Natural killer cell (primary cell): ENCODE measurements at regions of chr19 and their contacts with region 1.

Region 1: GRCh38 chr19:46932346-46932745 is 71.5 kb downstream of the ARHGAP35 start:
- DNase-seq: no peak
- ATAC-seq: no peak
- H3K4me3 ChIP-seq: no peak overlapping the region
- H3K4me3 Mint-ChIP-seq: no peak overlapping the region
- H3K27ac ChIP-seq: no peak overlapping the region
- H3K27ac Mint-ChIP-seq: no peak overlapping the region
- H3K4me1 ChIP-seq: peaks cover 29% of the 10 kb centered on the region
- H3K4me1 Mint-ChIP-seq: peaks cover 57 to 69% of the 10 kb centered on the region in 2 donors
- H3K27me3 ChIP-seq: no peaks in the 10 kb centered on the region
- H3K27me3 Mint-ChIP-seq: no peaks in the 10 kb centered on the region
- CTCF ChIP-seq: no peak

Region 2: DNA sequence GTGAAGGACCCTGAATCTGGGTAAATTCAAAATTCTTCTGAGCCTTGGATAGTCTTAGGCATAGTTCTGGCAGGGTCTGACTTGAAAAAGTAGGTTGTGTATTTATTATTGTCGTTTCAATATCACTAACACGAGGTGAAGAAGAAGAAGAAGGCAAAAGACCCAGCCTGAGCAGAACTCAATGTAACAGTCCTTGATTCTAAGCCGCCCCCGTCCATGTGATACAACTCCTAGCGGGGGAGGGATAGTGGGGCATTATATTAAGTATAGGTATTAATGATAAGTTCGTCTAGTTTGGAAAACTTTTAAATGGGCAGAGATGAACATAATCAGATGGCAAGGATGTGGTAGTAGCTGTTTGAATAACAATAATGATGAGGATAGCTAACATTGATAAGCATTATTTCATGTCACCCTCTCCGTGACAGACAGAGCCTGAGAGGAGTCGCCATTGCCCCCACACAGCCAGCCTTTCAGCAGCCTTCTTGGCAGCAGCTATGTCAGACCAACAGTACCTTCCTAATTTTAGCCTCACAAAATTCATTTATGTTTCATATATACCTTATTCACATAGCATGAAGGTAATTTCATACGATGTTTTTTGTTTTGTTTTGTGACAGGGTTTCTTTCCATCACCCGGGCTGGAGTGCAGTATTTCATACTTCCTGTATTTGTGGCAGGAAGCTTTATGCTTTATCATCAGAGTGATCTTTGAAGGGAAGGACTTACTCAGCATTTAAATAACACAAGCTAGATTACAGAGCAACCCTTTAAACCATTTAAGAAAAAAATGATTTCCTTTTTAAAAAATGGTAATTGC is 22.9 kb after region 1 on chr19:
- intact Hi-C with region 1: loop called (anchors 2 kb)
- DNase-seq: peak in 1 of 2 donors; percentile 71
- ATAC-seq: peak; percentile 84 to 86 (median 86)
- H3K4me3 ChIP-seq: peak overlapping the region; percentile 37
- H3K4me3 Mint-ChIP-seq: peak overlapping the region; percentile 81
- H3K27ac ChIP-seq: peak overlapping the region; percentile 79
- H3K27ac Mint-ChIP-seq: peak overlapping the region; percentile 92 to 93
- H3K4me1 ChIP-seq: peaks cover 55% of the 10 kb centered on the region
- H3K4me1 Mint-ChIP-seq: peaks cover 62 to 63% of the 10 kb centered on the region in 2 donors
- H3K27me3 ChIP-seq: no peaks in the 10 kb centered on the region
- H3K27me3 Mint-ChIP-seq: no peaks in the 10 kb centered on the region
- CTCF ChIP-seq: no peak

Region 3: DNA sequence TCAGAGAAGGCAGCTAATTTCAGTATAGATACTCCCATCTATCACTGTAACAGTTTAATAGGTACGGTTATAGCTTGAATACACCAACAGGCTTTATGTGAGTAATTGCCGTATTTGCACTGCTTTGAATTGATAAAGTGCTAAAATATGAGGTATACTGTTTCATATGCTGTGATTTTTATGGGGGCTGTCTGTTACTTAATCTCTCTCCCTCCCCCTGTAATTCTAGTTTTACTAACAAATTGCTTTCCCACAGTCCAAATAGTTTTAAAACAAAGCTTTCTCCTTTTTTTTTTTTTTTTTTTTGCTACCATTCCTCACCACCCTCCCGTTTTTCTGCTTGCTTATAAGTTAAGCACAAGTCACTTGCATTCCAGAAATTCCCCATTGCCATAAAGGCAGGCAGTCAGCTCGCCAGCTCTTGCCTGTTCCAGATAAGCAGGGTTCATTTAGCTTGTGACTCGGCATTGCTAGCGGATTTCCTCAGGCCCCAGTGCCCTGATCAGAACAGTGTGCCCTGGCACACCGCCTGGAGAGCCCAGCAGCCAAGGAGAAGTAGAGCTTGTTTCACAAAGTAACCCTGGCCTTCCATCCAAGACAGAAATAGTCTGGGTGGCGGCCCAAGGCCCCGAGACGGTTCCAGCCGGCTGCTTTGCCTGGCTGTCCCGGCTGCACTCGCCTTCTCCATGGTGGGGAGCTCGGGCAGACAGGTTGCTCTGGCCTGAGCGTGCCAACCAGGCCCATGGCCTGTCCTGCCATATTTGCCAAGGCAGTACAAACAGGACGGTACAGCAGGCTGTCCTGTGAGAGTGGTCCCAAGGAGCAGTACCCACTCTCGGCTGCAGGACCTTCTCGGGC is 43.8 kb after region 1 on chr19:
- intact Hi-C with region 1: loop called (anchors 5 kb)
- DNase-seq: no peak
- ATAC-seq: no peak
- H3K4me3 ChIP-seq: no peak overlapping the region
- H3K4me3 Mint-ChIP-seq: peak overlapping the region; percentile 33
- H3K27ac ChIP-seq: no peak overlapping the region
- H3K27ac Mint-ChIP-seq: peak overlapping the region; percentile 68 to 89
- H3K4me1 ChIP-seq: peaks cover 51% of the 10 kb centered on the region
- H3K4me1 Mint-ChIP-seq: peaks cover 48 to 50% of the 10 kb centered on the region in 2 donors
- H3K27me3 ChIP-seq: no peaks in the 10 kb centered on the region
- H3K27me3 Mint-ChIP-seq: no peaks in the 10 kb centered on the region
- CTCF ChIP-seq: no peak